Right cardiac atrium (tissue), 5 donors: ENCODE measurements at regions of chr1 and their contacts with region 1.

Region 1: DNA sequence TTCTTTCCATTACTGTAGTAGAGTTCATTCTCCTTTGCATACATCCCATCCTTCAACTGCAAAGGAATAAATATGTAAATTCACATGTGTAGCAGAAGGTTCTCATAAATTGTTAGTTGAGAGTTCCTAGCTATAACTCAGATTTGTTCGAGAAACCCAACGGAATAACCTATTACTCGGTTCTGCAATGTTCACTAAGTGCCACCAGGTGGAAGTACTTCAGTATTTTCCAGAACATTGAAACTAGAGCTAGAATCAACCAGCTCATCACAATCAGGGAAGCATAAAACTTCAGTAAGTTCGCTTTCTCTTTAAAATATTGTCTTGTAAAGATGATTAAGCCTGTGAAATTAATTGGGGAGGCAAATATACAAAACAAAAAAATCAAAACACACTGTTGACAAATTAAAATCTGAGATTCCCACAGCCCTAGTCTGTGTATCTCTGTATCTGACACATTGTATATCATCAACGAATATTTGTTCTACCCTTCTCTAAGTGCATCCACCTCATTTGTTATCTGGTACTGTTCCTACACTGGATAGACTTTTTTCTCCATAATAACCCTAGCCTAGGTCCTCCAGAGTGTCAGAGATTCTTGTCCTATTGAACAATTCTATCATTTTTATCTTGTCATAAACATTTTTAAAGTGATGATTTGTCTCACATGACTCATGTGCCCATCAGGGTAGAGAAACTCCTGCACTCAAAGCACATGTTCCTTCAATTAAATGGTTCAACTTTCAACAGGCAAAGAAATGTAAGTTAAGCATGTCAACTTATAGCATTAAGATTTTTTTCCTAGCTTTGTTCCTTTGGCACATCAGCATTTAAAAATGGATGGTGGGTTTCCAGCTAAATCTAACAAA is 31.9 kb downstream of the MROH9 start:
- DNase-seq: no peak
- ATAC-seq: peak; percentile 52 to 62
- H3K4me3 ChIP-seq: no peak overlapping the region
- H3K27ac ChIP-seq: no peak overlapping the region
- H3K4me1 ChIP-seq: no peaks in the 10 kb centered on the region
- H3K27me3 ChIP-seq: no peaks in the 10 kb centered on the region

Region 2: DNA sequence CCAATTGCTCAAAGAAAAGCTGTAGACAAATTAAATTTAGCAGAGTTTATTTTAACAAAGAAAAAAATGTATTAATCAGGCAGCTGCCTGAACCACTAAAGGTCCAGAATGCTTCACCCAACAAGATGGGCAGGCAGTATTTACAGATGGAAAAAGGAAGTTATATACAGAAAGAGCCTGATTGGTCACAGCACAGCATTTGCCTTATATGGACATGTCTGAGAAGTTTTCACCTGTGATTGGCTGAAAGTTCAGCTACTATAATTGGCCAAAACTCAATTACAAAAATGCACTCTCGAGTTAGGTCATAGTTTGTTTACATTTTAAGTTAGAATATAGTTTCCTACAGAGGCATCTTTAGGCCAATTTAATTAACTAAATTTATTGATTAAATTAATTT is 265.9 kb after region 1 on chr1:
- intact Hi-C with region 1: loop called in 2 of 4 experiments (anchors 10 kb)
- DNase-seq: no peak
- ATAC-seq: no peak
- H3K4me3 ChIP-seq: no peak overlapping the region
- H3K27ac ChIP-seq: no peak overlapping the region
- H3K4me1 ChIP-seq: no peaks in the 10 kb centered on the region
- H3K27me3 ChIP-seq: no peaks in the 10 kb centered on the region